CD14-positive monocyte (primary cell): ENCODE measurements at regions of chr14 and their contacts with region 1.

Region 1: DNA sequence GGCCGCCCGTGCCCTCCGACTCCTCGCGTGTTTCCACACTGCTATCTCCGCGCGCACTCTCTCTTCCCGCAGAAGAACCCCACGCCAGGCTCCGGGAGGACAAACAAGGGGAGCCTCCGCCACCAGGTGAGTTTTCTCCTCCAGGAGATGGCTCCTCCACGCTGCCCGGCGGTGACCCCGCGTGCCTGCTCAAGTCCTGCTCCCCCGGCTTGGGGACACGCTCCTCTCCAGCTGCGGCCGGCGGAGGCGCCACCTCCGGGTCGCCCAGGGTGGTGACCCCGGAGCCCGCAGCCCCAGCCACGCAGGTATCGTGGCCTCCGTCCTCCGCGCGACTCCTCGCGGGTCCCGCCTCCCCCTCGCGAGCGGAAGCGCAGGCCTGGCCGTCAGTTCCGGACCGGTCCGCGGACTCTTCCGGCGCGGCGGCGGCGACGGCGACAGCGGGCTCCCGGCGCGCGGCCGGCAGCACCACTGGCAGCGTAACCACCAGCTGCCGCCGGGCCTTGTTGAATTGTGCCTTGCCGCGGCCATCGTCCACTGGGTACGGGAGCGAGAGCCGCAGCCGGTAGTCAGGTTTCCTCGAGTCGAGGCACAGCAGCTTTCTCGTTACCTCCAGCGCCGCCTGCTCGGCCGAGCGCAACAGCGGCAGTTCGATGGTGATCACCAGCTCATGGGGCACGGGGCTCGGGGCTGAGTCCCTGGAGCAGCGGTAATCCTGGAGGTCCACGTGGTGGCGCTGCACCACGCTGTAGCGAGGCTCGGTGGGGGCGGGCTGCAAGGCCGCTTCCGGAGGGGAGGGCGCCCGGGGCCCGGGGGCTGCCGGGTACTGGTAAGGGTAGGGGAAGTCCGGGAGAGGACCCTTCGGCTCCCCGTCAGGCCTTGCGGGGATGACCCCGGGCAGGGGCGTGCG is 1.2 kb downstream of the DNAAF2 start:
- DNase-seq: peak; percentile 85 to 90 (median 87)
- H3K4me3 ChIP-seq: peak overlapping the region; percentile 72 to 97 (median 92)
- H3K4me3 Mint-ChIP-seq: peak overlapping the region; percentile 98 to 99
- H3K27ac ChIP-seq: peak overlapping the region; percentile 91 to 95
- H3K27ac Mint-ChIP-seq: peak overlapping the region; percentile 88 to 95 (median 93)
- H3K4me1 ChIP-seq: peaks cover 27 to 42% of the 10 kb centered on the region in 2 donors
- H3K4me1 Mint-ChIP-seq: peaks cover 51% of the 10 kb centered on the region
- H3K27me3 ChIP-seq: no peaks in the 10 kb centered on the region
- H3K27me3 Mint-ChIP-seq: peaks cover 0 to 6% (median 0%) of the 10 kb centered on the region in 3 donors
- CTCF ChIP-seq: peak; percentile 93

Region 2: DNA sequence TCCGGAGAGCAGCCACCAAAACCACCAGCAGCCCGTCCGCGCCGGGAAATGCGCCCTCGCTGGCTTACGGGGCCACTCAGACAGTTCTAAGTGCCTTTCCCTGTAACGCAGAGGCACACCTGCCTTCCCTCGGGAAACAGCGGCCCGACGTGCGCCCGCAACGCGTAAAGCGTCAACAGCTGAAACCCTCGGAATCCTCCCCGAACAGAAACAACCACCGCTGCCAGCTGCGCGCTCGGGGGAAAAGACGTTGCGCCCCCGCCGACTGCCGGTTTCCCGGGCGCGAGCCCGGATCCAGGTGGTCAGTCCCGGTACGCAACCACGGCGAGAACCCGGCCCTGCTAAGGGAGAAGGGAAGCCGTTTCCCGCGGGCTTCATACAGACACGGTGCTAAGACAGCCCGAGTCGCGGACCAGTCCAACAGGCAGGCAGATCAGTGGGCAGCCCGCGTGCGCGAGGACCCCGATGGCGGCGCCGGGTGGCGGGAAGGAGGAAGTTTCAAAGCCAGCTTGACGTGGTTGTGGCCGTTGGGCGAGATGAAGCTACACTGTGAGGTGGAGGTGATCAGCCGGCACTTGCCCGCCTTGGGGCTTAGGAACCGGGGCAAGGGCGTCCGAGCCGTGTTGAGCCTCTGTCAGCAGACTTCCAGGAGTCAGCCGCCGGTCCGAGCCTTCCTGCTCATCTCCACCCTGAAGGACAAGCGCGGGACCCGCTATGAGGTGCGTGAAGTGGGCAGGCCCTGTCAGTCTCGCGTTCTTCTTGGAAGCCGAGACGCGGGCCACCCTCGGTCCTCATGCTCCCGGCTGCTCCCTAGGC is 35.2 kb before region 1 on chr14 and contains the start of gene LRR1:
- intact Hi-C with region 1: loop called in 1 of 2 experiments (anchors 5 kb)
- DNase-seq: peak; percentile 76 to 79 (median 78)
- H3K4me3 ChIP-seq: peak within 1 kb of the TSS; percentile 77 to 96 (median 84)
- H3K4me3 Mint-ChIP-seq: peak within 1 kb of the TSS; percentile 98 to 99
- H3K27ac ChIP-seq: peak within 1 kb of the TSS; percentile 93 to 96
- H3K27ac Mint-ChIP-seq: peak within 1 kb of the TSS; percentile 90 to 99 (median 97)
- H3K4me1 ChIP-seq: peaks cover 11 to 19% of the 10 kb centered on the region in 2 donors
- H3K4me1 Mint-ChIP-seq: peaks cover 31% of the 10 kb centered on the region
- H3K27me3 ChIP-seq: no peaks in the 10 kb centered on the region
- H3K27me3 Mint-ChIP-seq: peaks cover 2 to 7% (median 7%) of the 10 kb centered on the region in 3 donors
- CTCF ChIP-seq: no peak
- polyA plus RNA-seq, gene LRR1: 3.4 to 12.7 (median 10.5) TPM

Region 3: DNA sequence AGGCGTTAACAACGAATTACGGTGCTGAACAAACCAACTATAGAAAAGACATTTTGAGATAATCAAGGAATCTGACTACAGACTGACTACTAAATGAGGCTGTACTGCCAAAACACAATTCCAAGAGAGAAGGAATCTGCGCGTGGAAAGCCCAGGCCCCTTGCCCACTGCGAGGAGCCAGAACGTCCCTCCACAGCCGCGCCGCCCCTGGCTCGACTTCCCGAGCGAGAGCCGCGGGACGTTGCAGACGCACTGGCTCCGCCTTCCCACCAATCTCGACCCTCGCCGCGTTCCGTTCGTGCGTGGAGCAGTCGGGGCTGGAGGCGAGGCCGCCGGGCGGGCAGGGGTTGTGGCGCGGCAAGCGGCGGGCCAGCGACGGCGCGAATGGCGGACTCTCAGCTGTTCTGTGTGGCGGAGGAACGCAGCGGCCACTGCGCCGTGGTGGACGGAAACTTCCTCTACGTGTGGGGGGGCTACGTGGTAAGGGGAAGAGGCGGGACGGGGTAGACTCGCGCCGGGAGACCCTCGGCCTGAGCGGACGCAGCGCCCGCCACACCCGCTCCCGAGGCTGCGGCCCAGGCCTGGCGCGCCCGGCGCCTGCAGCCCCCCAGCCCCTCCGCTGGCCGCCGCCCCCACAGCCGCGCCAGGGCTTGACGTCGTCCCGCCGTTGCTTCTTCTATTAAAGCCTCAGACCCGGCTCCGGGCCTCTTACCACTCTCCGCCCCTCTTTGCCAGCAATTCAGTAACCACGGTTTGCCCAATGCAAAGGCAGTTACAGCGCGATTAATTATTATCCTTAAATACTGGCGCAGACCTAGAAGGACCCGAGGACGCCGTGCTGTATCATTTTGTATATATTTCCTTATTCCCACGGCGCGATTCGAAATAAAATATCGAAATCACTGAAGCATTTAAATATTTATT is 59.2 kb after region 1 on chr14 and contains the start of gene KLHDC1:
- intact Hi-C with region 1: loop called in 1 of 2 experiments (anchors 2 kb)
- DNase-seq: peak; percentile 59 to 63 (median 63)
- H3K4me3 ChIP-seq: peak within 1 kb of the TSS; percentile 78 to 90 (median 82)
- H3K4me3 Mint-ChIP-seq: peak within 1 kb of the TSS; percentile 92 to 94
- H3K27ac ChIP-seq: peak within 1 kb of the TSS; percentile 66 to 78
- H3K27ac Mint-ChIP-seq: peak within 1 kb of the TSS; percentile 58 to 86 (median 83)
- H3K4me1 ChIP-seq: peaks cover 9 to 20% of the 10 kb centered on the region in 2 donors
- H3K4me1 Mint-ChIP-seq: peaks cover 29% of the 10 kb centered on the region
- H3K27me3 ChIP-seq: no peaks in the 10 kb centered on the region
- H3K27me3 Mint-ChIP-seq: peaks cover 0 to 5% (median 3%) of the 10 kb centered on the region in 3 donors
- CTCF ChIP-seq: no peak
- polyA plus RNA-seq, gene KLHDC1: 0.92 to 1.6 (median 1.5) TPM